ENCODE measurements at regions of chr13 and their contacts with region 1.

Region 1: GRCh38 chr13:30465585-30466357 is at the start of gene HMGB1:
- DNase-seq: peak; percentile 99
- H3K4me3 ChIP-seq: peak within 1 kb of the TSS; percentile 54 to 76 (median 58)
- H3K27ac ChIP-seq: peak within 1 kb of the TSS; percentile 89
- H3K4me1 ChIP-seq: peaks cover 23% of the 10 kb centered on the region
- H3K27me3 ChIP-seq: no peaks in the 10 kb centered on the region
- CTCF ChIP-seq: no peak
- total RNA-seq, gene HMGB1: 78.0 to 273 TPM

Region 2: DNA sequence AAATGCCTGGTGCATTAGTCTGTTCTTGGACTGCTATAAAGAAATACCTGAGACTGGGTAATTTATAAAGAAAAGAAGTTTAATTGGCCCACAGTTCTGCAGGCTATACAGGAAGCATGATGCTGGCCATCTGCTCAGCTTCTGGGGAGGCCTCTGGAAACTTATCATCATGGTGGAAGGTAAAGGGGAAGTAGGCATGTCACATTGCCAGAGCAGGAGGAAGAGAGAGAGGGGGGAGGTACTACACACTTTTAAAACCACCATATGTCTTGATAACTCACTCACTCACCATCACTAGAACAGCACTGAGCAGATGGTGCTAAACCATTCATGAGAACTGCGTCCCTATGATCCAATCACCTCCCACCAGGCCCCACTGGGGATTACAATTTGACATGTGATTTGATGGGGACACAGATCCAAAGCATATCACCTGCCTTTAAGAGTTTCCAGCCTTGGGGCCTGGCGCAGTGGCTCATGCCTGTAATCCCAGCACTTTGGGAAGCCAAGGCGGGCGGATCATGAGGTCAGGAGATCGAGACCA is 377.4 kb before region 1 on chr13:
- CTCF ChIA-PET with region 1: no interaction called
- dilution Hi-C with region 1: no loop called
- in situ Hi-C with region 1: no loop called
- intact Hi-C with region 1: no loop called
- DNase-seq: no peak
- H3K4me3 ChIP-seq: no peak overlapping the region
- H3K27ac ChIP-seq: no peak overlapping the region
- H3K4me1 ChIP-seq: no peaks in the 10 kb centered on the region
- H3K27me3 ChIP-seq: no peaks in the 10 kb centered on the region
- CTCF ChIP-seq: no peak

Region 3: GRCh38 chr13:30132623-30133553 is 332.9 kb before region 1 on chr13:
- CTCF ChIA-PET with region 1: no interaction called
- dilution Hi-C with region 1: no loop called
- in situ Hi-C with region 1: loop called in 1 of 2 experiments (anchors 25 kb)
- intact Hi-C with region 1: loop called (anchors 1 kb)
- DNase-seq: peak; percentile 74
- H3K4me3 ChIP-seq: no peak overlapping the region
- H3K27ac ChIP-seq: no peak overlapping the region
- H3K4me1 ChIP-seq: peaks cover 3% of the 10 kb centered on the region
- H3K27me3 ChIP-seq: no peaks in the 10 kb centered on the region
- CTCF ChIP-seq: peak; percentile 63 to 89

Region 4: DNA sequence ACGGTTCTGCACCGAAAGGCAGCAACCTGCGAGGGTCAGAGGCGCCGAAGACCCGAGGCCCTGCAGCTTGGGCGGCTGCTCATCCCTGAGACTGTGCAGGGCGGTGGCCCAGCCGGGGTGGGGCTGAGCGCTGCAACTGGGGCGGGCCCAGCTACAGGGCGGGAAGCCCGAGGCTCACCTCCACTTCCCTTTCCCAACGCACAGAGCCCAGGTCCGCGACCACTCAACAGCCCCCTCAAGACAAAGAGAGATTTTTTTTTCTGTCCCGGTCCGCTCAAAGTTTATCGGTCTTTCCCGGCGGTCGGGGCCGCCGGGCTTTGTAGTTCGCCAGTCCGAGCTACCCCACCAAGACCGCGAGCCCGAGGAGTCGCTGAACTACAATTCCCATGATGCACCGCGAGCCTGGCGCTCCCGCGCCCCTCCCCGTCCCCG is 159.0 kb before region 1 on chr13:
- CTCF ChIA-PET with region 1: no interaction called
- dilution Hi-C with region 1: no loop called
- in situ Hi-C with region 1: no loop called
- intact Hi-C with region 1: no loop called
- DNase-seq: peak; percentile 87
- H3K4me3 ChIP-seq: peak overlapping the region; percentile 94 to 96 (median 96)
- H3K27ac ChIP-seq: peak overlapping the region; percentile 67
- H3K4me1 ChIP-seq: peaks cover 23% of the 10 kb centered on the region
- H3K27me3 ChIP-seq: no peaks in the 10 kb centered on the region
- CTCF ChIP-seq: no peak

Region 5: GRCh38 chr13:30408319-30409101 is 57.3 kb before region 1 on chr13:
- CTCF ChIA-PET with region 1: no interaction called
- dilution Hi-C with region 1: no loop called
- in situ Hi-C with region 1: no loop called
- intact Hi-C with region 1: loop called (anchors 1 kb)
- DNase-seq: peak; percentile 73
- H3K4me3 ChIP-seq: peak overlapping the region in 1 of 3 experiments; percentile 24
- H3K27ac ChIP-seq: peak overlapping the region; percentile 23
- H3K4me1 ChIP-seq: peaks cover 17% of the 10 kb centered on the region
- H3K27me3 ChIP-seq: no peaks in the 10 kb centered on the region
- CTCF ChIP-seq: peak; percentile 36 to 75

Region 6: GRCh38 chr13:30504081-30504480 is 38.3 kb after region 1 on chr13:
- CTCF ChIA-PET with region 1: no interaction called
- dilution Hi-C with region 1: no loop called
- in situ Hi-C with region 1: no loop called
- intact Hi-C with region 1: no loop called
- DNase-seq: no peak
- H3K4me3 ChIP-seq: no peak overlapping the region
- H3K27ac ChIP-seq: no peak overlapping the region
- H3K4me1 ChIP-seq: no peaks in the 10 kb centered on the region
- H3K27me3 ChIP-seq: no peaks in the 10 kb centered on the region
- CTCF ChIP-seq: no peak

Region 7: GRCh38 chr13:30581582-30581981 is 115.8 kb after region 1 on chr13:
- CTCF ChIA-PET with region 1: no interaction called
- dilution Hi-C with region 1: no loop called
- in situ Hi-C with region 1: no loop called
- intact Hi-C with region 1: loop called (anchors 1 kb)
- DNase-seq: no peak
- H3K4me3 ChIP-seq: no peak overlapping the region
- H3K27ac ChIP-seq: no peak overlapping the region
- H3K4me1 ChIP-seq: peaks cover 20% of the 10 kb centered on the region
- H3K27me3 ChIP-seq: no peaks in the 10 kb centered on the region
- CTCF ChIP-seq: peak; percentile 42 to 54

Region 8: DNA sequence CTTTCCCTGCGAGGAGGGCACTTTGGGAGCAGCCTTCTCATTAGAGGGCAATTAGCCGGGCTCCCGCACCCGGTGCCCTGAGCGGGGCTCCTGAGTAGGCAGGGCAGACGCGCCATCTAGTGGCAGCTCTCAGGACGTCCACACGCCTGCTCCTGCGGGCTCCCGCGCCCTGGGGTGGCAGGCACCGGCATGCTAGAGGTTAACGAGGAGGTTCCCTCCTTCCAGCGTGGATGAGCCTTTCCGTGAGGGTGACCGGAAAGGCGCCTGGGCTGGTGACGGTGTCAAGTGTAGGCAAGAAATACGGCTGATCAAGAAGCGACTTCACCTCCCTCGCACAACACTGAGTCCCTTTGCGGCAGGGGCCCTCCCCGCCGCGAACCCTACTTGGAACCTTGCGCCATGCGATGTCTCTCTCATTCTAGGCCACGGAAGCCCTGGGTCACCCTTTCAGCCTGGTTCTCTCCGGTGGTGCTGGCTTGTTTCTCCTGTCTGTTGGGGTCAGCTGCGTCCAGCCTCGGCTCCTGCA is 337.2 kb after region 1 on chr13:
- CTCF ChIA-PET with region 1: no interaction called
- dilution Hi-C with region 1: no loop called
- in situ Hi-C with region 1: no loop called
- intact Hi-C with region 1: loop called (anchors 1 kb)
- DNase-seq: peak; percentile 77
- H3K4me3 ChIP-seq: peak overlapping the region in 1 of 3 experiments; percentile 40
- H3K27ac ChIP-seq: no peak overlapping the region
- H3K4me1 ChIP-seq: peaks cover 45% of the 10 kb centered on the region
- H3K27me3 ChIP-seq: no peaks in the 10 kb centered on the region
- CTCF ChIP-seq: peak; percentile 76 to 95

Region 9: GRCh38 chr13:31012655-31013024 is 546.9 kb after region 1 on chr13:
- CTCF ChIA-PET with region 1: no interaction called
- dilution Hi-C with region 1: no loop called
- in situ Hi-C with region 1: no loop called
- intact Hi-C with region 1: no loop called
- DNase-seq: no peak
- H3K4me3 ChIP-seq: no peak overlapping the region
- H3K27ac ChIP-seq: no peak overlapping the region
- H3K4me1 ChIP-seq: peaks cover 16% of the 10 kb centered on the region
- H3K27me3 ChIP-seq: no peaks in the 10 kb centered on the region
- CTCF ChIP-seq: peak; percentile 20 to 49